ENCODE measurements at regions of chr9 and their contacts with region 1.

Region 1: GRCh38 chr9:100352727-100353505 is at the start of gene TEX10:
- DNase-seq: peak; percentile 94
- H3K4me3 ChIP-seq: peak within 1 kb of the TSS; percentile 91
- H3K27ac ChIP-seq: peak within 1 kb of the TSS; percentile 69
- H3K4me1 ChIP-seq: peaks cover 51% of the 10 kb centered on the region
- CTCF ChIP-seq: no peak
- total RNA-seq, gene TEX10: 39.2 and 43.9 TPM in 2 replicates

Region 2: DNA sequence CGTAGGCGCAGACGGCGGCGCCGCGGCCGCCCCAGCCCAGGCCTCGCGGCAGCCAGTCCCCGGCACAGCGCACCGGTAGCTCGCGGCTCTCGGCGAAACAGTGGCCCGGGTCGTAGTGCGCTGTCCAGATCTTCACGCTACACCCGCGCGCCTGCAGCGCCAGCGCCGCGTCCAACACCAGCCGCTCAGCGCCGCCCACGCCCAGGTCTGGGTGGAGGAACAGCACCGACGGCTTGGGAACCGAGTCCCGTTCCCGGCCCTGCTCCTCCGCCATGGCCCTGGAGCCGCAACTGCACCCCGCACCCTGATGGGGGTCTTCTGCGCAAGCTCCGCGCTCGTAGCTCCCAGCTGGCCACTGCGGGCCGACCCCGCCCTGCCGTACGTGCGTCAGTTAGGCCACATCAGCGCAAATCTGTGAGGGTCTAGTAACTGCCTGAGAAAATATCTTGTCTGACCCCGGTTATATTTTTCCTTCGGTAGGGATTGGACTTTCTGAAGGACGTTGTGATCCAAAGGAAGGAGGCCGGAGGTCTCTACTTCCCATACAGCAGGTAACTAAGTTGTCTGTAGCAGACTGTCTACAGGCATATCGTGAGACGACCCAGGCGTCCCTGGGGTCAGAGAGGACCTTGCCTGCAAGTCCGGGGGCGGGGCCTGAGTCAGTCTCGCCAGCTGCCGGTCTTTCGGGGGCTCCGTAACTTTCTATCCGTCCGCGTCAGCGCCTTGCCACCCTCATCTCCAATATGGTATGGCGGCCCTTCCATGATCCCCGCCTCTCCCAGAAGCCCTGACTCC is 1131.1 kb before region 1 on chr9 and contains the starts of genes ALG2 and SEC61B:
- CTCF ChIA-PET with region 1: no interaction called
- POLR2A ChIA-PET with region 1: no interaction called
- intact Hi-C with region 1: loop called (anchors 5 kb)
- DNase-seq: peak; percentile 96
- H3K4me3 ChIP-seq: peak within 1 kb of the TSS; percentile 91
- H3K27ac ChIP-seq: peak within 1 kb of the TSS; percentile 72
- H3K4me1 ChIP-seq: peaks cover 35% of the 10 kb centered on the region
- CTCF ChIP-seq: no peak
- total RNA-seq, gene ALG2: 22.2 and 26.5 TPM in 2 replicates
- total RNA-seq, gene SEC61B: 97.5 and 106 TPM in 2 replicates

Region 3: GRCh38 chr9:100341889-100342288 is 11.0 kb before region 1 on chr9:
- CTCF ChIA-PET with region 1: no interaction called
- POLR2A ChIA-PET with region 1: interaction called, 11 read pairs
- intact Hi-C with region 1: no loop called
- DNase-seq: no peak
- H3K4me3 ChIP-seq: no peak overlapping the region
- H3K27ac ChIP-seq: no peak overlapping the region
- H3K4me1 ChIP-seq: peaks cover 14% of the 10 kb centered on the region
- CTCF ChIP-seq: no peak

Region 4: DNA sequence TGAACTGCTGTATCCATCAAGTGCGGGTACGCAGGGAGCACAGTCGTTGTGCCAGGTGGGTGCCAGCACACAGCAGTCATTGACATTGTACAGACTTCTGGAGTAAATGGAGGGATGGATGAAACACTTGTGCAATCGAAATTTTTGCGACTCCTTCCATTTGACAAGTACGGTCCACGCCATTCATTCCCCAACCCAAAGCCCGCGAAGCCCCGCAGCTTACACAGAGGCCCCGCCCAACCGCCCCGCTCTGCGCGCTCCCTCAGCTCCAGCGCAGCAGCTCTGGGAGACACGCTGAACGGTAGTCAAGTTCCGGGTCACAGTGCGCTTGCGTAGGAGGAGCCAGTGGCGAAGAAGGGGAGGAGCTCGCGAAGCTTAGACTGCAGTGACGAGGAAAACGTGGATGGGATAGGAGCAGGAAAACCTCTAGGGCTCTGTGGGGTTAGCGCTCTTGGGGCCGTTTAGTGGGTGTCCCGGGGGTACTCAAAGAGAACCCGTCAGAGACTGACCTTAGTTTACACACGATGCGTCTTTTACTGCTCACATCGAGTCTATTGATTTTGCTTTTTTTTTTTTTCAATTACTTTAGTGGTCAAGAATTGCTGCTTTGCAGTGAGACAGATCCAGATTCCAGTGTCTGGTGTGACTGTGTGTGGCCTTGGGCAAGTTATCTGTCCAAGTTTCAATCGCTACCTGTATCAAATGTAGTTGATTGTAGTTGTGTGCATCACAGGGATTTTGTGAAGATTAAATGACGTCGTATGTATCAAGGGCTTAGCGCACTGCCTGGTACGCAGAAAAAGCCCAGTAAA is 58.8 kb after region 1 on chr9:
- CTCF ChIA-PET with region 1: no interaction called
- POLR2A ChIA-PET with region 1: interaction called, 15 read pairs
- intact Hi-C with region 1: loop called (anchors 2 kb)
- DNase-seq: peak; percentile 94
- H3K4me3 ChIP-seq: peak overlapping the region; percentile 66
- H3K27ac ChIP-seq: no peak overlapping the region
- H3K4me1 ChIP-seq: peaks cover 18% of the 10 kb centered on the region
- CTCF ChIP-seq: no peak

Region 5: DNA sequence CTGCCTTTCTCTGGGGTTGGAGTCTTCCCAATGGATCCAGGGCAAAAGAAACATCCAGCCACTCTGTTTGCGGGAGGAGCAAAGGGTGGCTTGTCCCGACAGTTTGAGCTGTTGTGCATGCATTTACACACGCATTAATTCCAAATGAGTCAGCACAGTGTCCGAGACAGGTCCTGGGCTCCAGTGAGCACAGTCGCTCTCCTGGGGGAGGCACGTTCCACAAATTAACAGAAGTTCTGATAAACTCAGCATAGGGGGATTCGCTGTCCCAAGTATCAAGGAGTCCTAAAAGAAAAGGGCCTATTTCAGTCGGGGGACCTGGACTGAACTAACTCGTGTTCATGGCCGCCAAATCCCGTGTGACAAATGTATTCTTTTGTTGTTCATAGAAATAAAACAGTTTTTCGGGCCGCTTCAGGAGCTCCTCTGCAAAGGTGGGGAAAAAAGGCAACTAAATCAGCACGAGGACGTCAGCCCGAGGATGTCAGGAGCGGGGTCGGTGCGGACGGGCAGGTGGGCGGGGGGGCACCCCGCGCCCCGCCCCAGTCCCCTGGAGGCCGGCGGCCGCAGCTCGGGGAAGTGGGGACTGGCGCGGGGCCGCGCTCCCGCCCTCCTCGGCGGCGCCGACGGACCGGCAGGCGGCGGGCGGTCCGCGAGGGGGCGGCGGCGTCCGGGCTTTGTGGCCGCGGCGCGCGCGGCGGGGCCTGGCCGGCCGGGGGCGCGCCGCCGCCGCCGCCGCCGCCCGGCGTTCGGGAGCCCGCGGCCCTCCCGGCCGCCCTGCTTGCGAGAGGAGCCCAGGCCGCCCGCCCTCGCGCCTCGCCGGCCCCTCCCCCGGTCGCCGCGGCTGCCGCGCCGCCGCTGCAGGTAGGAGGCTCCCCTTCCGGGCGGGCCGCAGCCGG is 73.9 kb after region 1 on chr9 and contains the start of gene MSANTD3:
- CTCF ChIA-PET with region 1: no interaction called
- POLR2A ChIA-PET with region 1: interaction called, 3 read pairs
- intact Hi-C with region 1: loop called (anchors 5 kb)
- DNase-seq: peak; percentile 81
- H3K4me3 ChIP-seq: peak within 1 kb of the TSS; percentile 91
- H3K27ac ChIP-seq: peak within 1 kb of the TSS; percentile 59
- H3K4me1 ChIP-seq: peaks cover 20% of the 10 kb centered on the region
- CTCF ChIP-seq: no peak
- total RNA-seq, gene MSANTD3: 38.0 and 51.7 TPM in 2 replicates

Region 6: GRCh38 chr9:100587375-100587774 is 234.5 kb after region 1 on chr9:
- CTCF ChIA-PET with region 1: no interaction called
- POLR2A ChIA-PET with region 1: no interaction called
- intact Hi-C with region 1: no loop called
- DNase-seq: no peak
- H3K4me3 ChIP-seq: no peak overlapping the region
- H3K27ac ChIP-seq: no peak overlapping the region
- H3K4me1 ChIP-seq: peaks cover 15% of the 10 kb centered on the region
- CTCF ChIP-seq: no peak

Region 7: DNA sequence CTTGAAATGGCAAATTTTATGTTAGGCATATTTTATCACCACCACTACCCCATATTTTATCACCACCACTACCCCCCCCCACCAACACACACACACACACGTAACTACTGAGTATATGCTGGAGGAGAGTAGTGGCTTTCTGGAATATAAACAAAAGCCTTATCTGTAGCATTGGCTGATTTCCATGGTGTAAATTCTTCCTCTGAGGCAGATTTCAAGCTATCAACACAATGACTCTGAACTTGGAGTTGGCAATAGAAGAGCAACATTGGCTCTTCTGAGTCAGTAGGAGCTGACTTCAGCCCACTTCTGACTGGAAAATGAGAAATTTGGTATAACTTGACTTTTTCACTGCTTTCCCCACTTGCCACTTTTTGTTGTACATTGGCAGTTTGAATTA is 368.0 kb after region 1 on chr9:
- CTCF ChIA-PET with region 1: no interaction called
- POLR2A ChIA-PET with region 1: no interaction called
- intact Hi-C with region 1: no loop called
- DNase-seq: no peak
- H3K4me3 ChIP-seq: no peak overlapping the region
- H3K27ac ChIP-seq: no peak overlapping the region
- H3K4me1 ChIP-seq: no peaks in the 10 kb centered on the region
- CTCF ChIP-seq: no peak

Measured in OCI-LY7 (cell line).